T-cell (primary cell): ENCODE measurements at regions of chr10 and their contacts with region 1.

Region 1: DNA sequence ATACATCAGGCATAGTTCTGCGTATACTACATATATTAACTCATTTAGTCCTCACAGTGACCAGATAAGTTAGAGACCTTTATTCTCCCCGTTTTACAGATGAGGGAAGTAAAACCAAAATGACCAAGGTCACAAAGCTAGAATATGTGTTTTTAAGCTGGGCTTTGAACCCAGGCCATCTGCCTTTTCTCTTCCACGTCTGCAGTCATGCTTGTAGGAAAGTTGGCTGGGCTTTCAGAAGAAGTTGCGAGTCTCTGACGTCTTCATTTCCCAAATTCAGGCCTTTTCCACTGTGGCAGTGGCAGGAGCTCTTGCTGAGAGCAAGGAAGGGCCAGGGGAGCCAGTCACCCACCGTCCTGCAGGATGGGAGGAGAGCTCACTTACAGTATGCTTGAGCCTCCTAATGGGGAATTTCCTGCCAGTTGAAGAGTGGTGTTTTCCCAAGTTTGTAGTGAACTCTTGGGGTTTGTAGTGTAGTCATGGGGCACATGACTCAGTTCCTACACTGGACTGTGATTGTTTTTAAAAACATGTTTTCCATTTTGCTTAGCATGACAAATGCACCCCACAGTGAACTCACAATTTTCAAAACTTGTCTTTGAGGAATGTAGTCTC is 34.2 kb downstream of the CYP17A1 start:
- DNase-seq: peak in 1 of 35 experiments; percentile 24
- ATAC-seq: peak in 1 of 4 experiments; percentile 35
- H3K4me3 ChIP-seq: no peak overlapping the region
- H3K4me3 Mint-ChIP-seq: no peak overlapping the region
- H3K27ac ChIP-seq: no peak overlapping the region
- H3K27ac Mint-ChIP-seq: peak overlapping the region; percentile 69 to 80
- H3K4me1 ChIP-seq: peaks cover 7 to 10% of the 10 kb centered on the region in 2 experiments
- H3K4me1 Mint-ChIP-seq: peaks cover 21 to 41% (median 38%) of the 10 kb centered on the region in 3 donors
- H3K27me3 ChIP-seq: no peaks in the 10 kb centered on the region
- H3K27me3 Mint-ChIP-seq: no peaks in the 10 kb centered on the region

Region 2: GRCh38 chr10:102782673-102783551 is 20.1 kb before region 1 on chr10:
- CTCF ChIA-PET with region 1: no interaction called
- POLR2A ChIA-PET with region 1: no interaction called
- DNase-seq: no peak
- ATAC-seq: no peak
- H3K4me3 ChIP-seq: no peak overlapping the region
- H3K4me3 Mint-ChIP-seq: no peak overlapping the region
- H3K27ac ChIP-seq: no peak overlapping the region
- H3K27ac Mint-ChIP-seq: no peak overlapping the region
- H3K4me1 ChIP-seq: peaks cover 0 to 27% of the 10 kb centered on the region in 2 experiments
- H3K4me1 Mint-ChIP-seq: peaks cover 58 to 63% (median 60%) of the 10 kb centered on the region in 3 donors
- H3K27me3 ChIP-seq: no peaks in the 10 kb centered on the region
- H3K27me3 Mint-ChIP-seq: no peaks in the 10 kb centered on the region

Region 3: GRCh38 chr10:102817175-102817574 is 14.1 kb after region 1 on chr10:
- CTCF ChIA-PET with region 1: no interaction called
- POLR2A ChIA-PET with region 1: interaction called in 1 of 2 experiments, 10 read pairs
- DNase-seq: no peak
- ATAC-seq: no peak
- H3K4me3 ChIP-seq: no peak overlapping the region
- H3K4me3 Mint-ChIP-seq: no peak overlapping the region
- H3K27ac ChIP-seq: no peak overlapping the region
- H3K27ac Mint-ChIP-seq: no peak overlapping the region
- H3K4me1 ChIP-seq: peaks cover 0 to 8% of the 10 kb centered on the region in 2 experiments
- H3K4me1 Mint-ChIP-seq: peaks cover 6 to 10% (median 7%) of the 10 kb centered on the region in 3 donors
- H3K27me3 ChIP-seq: no peaks in the 10 kb centered on the region
- H3K27me3 Mint-ChIP-seq: no peaks in the 10 kb centered on the region

Region 4: DNA sequence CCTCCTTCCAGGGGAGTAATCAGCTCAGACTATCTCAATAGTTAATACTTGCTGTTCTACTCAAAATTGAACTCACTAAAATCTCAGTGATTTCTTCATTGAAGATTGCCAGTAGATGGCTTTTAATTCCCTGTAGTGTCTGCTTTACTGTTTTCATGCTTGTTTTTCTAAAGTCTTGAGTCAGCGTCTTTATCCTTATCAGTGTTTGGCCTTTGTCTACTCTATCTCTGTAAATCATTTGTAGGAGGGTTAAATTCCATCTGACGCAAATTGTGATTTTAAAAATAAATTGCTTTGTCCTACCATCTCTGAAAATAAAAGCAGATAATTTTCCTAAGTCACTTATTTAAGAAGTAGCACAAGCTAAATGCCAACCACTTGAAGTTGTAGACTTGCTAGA is 162.4 kb after region 1 on chr10:
- CTCF ChIA-PET with region 1: no interaction called
- POLR2A ChIA-PET with region 1: no interaction called
- DNase-seq: no peak
- ATAC-seq: no peak
- H3K4me3 ChIP-seq: no peak overlapping the region
- H3K4me3 Mint-ChIP-seq: no peak overlapping the region
- H3K27ac ChIP-seq: no peak overlapping the region
- H3K27ac Mint-ChIP-seq: no peak overlapping the region
- H3K4me1 ChIP-seq: no peaks in the 10 kb centered on the region
- H3K4me1 Mint-ChIP-seq: no peaks in the 10 kb centered on the region
- H3K27me3 ChIP-seq: no peaks in the 10 kb centered on the region
- H3K27me3 Mint-ChIP-seq: no peaks in the 10 kb centered on the region

Region 5: GRCh38 chr10:103139803-103140202 is 336.8 kb after region 1 on chr10:
- CTCF ChIA-PET with region 1: no interaction called
- POLR2A ChIA-PET with region 1: no interaction called
- DNase-seq: no peak
- ATAC-seq: no peak
- H3K4me3 ChIP-seq: no peak overlapping the region
- H3K4me3 Mint-ChIP-seq: no peak overlapping the region
- H3K27ac ChIP-seq: no peak overlapping the region
- H3K27ac Mint-ChIP-seq: peak overlapping the region in 1 of 2 donors; percentile 45
- H3K4me1 ChIP-seq: no peaks in the 10 kb centered on the region
- H3K4me1 Mint-ChIP-seq: peaks cover 4 to 14% (median 6%) of the 10 kb centered on the region in 3 donors
- H3K27me3 ChIP-seq: no peaks in the 10 kb centered on the region
- H3K27me3 Mint-ChIP-seq: no peaks in the 10 kb centered on the region

Region 6: DNA sequence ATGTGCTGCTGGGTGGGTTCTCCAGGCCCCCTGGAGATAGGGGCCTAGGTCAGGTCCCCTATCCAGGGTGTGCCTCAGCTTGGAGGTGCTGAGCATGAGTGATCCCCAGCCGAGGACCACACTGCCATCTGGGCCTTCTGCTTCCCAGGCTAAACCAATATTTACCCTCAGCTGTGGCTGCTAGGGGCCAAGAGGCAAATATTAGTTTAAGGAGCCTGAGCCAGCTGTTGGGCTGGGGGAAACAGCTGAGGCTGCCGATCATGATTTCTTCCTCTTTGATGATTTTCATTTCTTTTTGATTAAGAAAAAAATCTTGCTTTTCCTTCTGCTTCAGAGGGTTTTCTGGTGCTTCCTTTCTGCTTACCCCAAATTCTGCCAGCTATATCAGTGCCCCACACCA is 773.8 kb after region 1 on chr10:
- CTCF ChIA-PET with region 1: no interaction called
- POLR2A ChIA-PET with region 1: no interaction called
- DNase-seq: no peak
- ATAC-seq: no peak
- H3K4me3 ChIP-seq: no peak overlapping the region
- H3K4me3 Mint-ChIP-seq: no peak overlapping the region
- H3K27ac ChIP-seq: no peak overlapping the region
- H3K27ac Mint-ChIP-seq: no peak overlapping the region
- H3K4me1 ChIP-seq: no peaks in the 10 kb centered on the region
- H3K4me1 Mint-ChIP-seq: no peaks in the 10 kb centered on the region
- H3K27me3 ChIP-seq: peaks cover 0 to 26% of the 10 kb centered on the region in 2 experiments
- H3K27me3 Mint-ChIP-seq: peaks cover 3 to 5% of the 10 kb centered on the region in 2 donors